A549 (cell line): ENCODE measurements at regions of chr17 and their contacts with region 1.

Region 1: DNA sequence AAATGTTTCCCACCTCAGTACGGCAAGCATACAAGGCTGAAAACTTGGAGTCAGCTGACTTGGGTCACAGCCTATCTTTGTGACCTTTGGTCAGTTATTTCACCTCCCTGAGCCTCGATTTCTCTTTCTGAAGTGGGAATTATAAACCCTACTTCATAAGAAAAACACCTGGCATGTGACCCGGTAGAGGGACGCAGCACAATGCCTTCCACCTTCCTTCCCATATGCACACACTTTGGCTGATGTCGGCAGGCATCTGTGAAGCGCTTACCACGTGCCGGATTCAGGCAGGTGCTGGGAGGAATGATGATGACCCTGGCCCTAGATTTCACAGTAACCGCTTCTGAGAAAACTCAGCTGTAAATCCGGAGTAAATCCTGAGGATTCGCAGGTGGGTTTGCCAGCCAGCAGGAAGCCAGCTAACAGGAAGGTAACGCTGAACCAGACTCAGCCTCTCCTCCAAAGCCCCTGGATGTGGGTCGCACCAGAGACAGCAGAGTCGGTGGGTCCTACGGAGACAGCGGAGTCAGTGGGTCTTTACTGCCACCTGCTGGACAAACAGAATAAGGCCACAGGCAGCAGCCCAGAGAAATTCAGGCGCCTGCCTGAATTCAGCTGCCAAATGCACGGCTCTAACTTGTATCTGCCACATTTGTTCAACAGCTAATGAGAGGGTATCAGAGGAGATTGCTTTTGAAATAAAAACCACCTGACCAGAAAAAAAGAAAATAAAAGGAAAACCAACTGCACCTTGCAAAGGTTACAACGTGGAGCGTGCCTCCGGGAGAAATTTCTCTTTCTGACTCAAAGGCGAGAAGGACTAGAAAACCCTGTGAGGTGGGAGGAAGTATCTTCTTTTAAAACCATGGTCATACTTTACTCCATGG is 16.6 kb downstream of the COPRS start:
- DNase-seq: peak; percentile 67 to 87
- ATAC-seq: peak; percentile 85 to 95
- H3K4me3 ChIP-seq: no peak overlapping the region; the same call in 2 of the 3 replicates
- H3K27ac ChIP-seq: peak overlapping the region in 1 of 2 experiments; percentile 68; a peak in 3 of 6 replicates
- H3K4me1 ChIP-seq: peaks cover 10% of the 10 kb centered on the region; the same call in 2 of the 3 replicates
- CTCF ChIP-seq: peak; percentile 99
- EP300 ChIP-seq: no peak
- POLR2A ChIP-seq: no peak
- RAD21 ChIP-seq: peak; percentile 98 to 99

Region 2: DNA sequence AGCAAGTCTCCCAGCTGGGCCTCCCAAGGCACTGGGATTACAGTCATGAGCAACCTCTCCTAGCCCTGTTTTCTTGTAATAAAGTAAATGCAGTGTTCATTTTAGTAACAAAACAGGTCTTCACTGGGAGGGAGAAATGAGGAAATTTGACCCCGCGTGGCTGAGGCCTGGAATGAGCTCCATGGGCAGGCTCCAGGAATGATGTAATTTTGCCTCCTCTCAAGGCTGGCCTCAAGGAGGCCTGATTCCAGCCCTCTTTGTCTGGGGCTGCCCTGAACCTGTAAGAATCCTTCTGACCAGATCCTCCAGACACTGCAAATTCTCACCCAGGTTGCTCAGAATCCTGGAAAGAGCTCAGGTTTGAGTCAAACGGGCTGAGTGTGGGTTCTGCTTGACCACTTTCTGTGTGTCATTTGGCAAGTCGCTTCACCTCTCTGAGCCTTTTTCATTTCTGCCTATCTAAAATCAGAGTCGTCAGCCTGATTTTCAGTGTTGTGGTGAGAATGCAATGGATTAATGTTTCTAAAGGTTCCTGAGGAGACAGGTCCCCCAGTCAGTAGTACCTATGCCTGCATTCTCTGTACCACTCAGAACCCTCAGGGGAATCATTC is 393.9 kb before region 1 on chr17:
- CTCF ChIA-PET with region 1: interaction called, 13 read pairs
- POLR2A ChIA-PET with region 1: no interaction called
- DNase-seq: no peak
- ATAC-seq: no peak
- H3K4me3 ChIP-seq: no peak overlapping the region
- H3K27ac ChIP-seq: no peak overlapping the region
- H3K4me1 ChIP-seq: no peaks in the 10 kb centered on the region
- CTCF ChIP-seq: no peak
- EP300 ChIP-seq: no peak
- POLR2A ChIP-seq: no peak
- RAD21 ChIP-seq: no peak

Region 3: GRCh38 chr17:31541559-31541958 is 300.9 kb before region 1 on chr17:
- CTCF ChIA-PET with region 1: interaction called, 47 read pairs
- POLR2A ChIA-PET with region 1: no interaction called
- DNase-seq: peak in 1 of 2 experiments; percentile 42
- ATAC-seq: peak; percentile 75 to 82
- H3K4me3 ChIP-seq: no peak overlapping the region
- H3K27ac ChIP-seq: no peak overlapping the region
- H3K4me1 ChIP-seq: no peaks in the 10 kb centered on the region
- CTCF ChIP-seq: no peak
- EP300 ChIP-seq: no peak
- POLR2A ChIP-seq: no peak
- RAD21 ChIP-seq: no peak

Region 4: DNA sequence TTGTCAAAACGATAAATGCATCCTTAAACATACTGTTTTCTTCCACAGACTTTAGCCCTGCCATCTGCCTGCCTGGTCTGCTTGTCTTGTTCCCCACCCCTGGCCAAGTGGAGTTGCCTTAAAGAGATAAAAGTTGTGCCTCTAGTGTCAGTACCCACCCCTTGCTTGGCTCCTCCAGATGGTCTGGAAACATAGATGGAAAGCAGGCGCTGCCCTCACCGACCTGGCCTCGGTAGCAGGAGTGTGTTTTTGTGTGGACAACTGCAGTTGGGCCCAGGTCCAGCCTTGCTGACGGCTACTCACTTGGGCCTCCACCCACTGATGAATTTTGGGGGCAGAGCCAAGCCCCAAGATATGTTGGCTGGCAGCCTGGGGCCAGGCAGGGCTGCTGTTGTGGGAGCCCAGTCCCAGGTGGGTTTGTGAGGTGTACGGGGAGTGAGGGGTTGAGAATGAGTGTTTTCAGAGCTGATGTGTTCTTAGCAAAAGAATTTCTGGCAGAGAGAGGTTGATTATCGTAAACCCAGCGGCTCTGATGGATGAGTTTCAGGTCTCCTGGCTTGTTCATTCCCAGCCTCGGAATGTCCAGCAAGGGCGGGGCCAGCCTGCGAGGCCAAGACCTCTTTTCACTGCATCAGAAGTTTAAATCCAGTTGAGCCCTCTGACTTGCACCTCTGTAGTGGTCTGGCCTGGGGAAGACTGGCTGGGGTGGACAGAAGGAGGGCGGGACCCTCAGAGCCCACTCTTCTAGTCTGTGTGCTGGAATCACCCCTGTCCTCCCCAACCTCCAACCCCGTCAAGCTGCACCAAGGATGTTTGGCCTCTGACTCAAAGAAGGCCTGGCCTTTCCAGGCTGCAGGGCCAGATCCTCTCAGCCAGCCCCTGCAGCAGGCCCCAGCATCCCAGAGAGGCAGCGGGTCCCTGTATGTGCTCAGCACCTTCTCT is 271.2 kb before region 1 on chr17:
- CTCF ChIA-PET with region 1: interaction called, 39 read pairs
- POLR2A ChIA-PET with region 1: no interaction called
- DNase-seq: peak in 1 of 2 experiments; percentile 24
- ATAC-seq: peak; percentile 11 to 74; a peak in 3 of 6 replicates
- H3K4me3 ChIP-seq: no peak overlapping the region
- H3K27ac ChIP-seq: peak overlapping the region in 1 of 2 experiments; percentile 51; a peak in 2 of 6 replicates
- H3K4me1 ChIP-seq: peaks cover 11% of the 10 kb centered on the region
- CTCF ChIP-seq: no peak
- EP300 ChIP-seq: no peak
- POLR2A ChIP-seq: no peak
- RAD21 ChIP-seq: no peak

Region 5: GRCh38 chr17:31609996-31610910 is 232.2 kb before region 1 on chr17:
- CTCF ChIA-PET with region 1: interaction called, 12 read pairs
- POLR2A ChIA-PET with region 1: no interaction called
- DNase-seq: no peak
- ATAC-seq: no peak; a peak in 1 of 6 replicates
- H3K4me3 ChIP-seq: no peak overlapping the region
- H3K27ac ChIP-seq: no peak overlapping the region
- H3K4me1 ChIP-seq: no peaks in the 10 kb centered on the region
- CTCF ChIP-seq: no peak
- EP300 ChIP-seq: no peak
- POLR2A ChIP-seq: no peak
- RAD21 ChIP-seq: no peak

Region 6: DNA sequence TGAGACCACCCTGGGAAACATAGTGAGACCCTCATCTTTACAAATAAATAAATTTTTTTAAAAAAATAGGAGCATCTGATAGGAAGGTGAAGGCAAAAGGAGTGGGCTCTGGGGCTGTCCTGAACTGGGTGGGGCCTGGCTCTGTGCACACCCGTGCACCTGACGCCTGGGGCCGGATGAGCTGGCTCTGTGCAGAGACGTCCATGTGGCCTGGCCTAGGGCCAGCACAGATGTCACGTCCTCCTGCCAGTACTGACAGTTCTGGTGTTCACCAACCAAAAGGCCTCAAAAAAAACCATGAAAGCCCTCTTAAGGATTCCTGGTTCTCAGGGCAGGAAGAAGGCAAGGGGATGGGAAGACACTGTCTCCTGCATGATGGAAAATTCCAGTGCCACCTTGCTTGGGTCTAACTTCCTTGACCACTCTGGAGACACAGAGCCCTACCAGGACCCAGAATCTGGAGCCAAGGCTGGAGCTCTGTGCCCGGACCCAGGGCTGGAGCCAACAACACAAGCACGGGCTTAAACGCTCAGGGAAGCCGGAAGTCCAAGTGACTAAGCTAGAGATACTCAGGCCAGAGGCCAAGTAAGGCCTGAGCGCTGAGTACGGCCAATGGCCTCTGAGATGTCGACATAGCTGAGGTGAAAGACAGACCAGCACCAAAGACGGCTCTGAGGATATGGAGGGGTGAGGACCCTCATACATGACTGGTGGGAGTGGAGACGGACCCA is 16.3 kb before region 1 on chr17:
- CTCF ChIA-PET with region 1: interaction called, 83 read pairs
- POLR2A ChIA-PET with region 1: no interaction called
- DNase-seq: no peak
- ATAC-seq: no peak
- H3K4me3 ChIP-seq: no peak overlapping the region
- H3K27ac ChIP-seq: no peak overlapping the region
- H3K4me1 ChIP-seq: no peaks in the 10 kb centered on the region
- CTCF ChIP-seq: no peak
- EP300 ChIP-seq: no peak
- POLR2A ChIP-seq: no peak
- RAD21 ChIP-seq: no peak

Region 7: DNA sequence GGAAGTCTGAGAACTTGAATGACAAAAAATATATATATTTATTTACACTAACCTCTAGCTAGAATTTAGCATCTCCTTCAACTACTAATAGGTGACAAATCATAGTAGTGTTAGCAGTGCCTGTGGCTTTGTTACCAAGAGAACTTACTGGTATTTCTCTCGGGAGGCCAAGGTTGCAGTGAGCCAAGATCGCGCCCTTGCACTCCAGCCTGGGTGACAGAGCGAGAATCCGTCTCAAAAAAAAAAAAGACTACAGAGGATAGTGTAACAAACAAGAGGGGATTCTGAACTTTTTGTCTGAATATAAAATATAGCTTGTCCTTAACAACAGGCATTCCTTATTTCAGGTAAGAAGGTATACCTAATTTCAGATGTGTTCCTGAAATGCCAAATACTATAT is 93.1 kb after region 1 on chr17:
- CTCF ChIA-PET with region 1: no interaction called
- POLR2A ChIA-PET with region 1: no interaction called
- DNase-seq: no peak
- ATAC-seq: no peak
- H3K4me3 ChIP-seq: no peak overlapping the region
- H3K27ac ChIP-seq: no peak overlapping the region
- H3K4me1 ChIP-seq: peaks cover 6% of the 10 kb centered on the region; the same call in 2 of the 3 replicates
- CTCF ChIP-seq: no peak
- EP300 ChIP-seq: no peak
- POLR2A ChIP-seq: no peak
- RAD21 ChIP-seq: no peak